WTC11 (cell line): ENCODE measurements at regions of chr16 and their contacts with region 1.

Region 1: DNA sequence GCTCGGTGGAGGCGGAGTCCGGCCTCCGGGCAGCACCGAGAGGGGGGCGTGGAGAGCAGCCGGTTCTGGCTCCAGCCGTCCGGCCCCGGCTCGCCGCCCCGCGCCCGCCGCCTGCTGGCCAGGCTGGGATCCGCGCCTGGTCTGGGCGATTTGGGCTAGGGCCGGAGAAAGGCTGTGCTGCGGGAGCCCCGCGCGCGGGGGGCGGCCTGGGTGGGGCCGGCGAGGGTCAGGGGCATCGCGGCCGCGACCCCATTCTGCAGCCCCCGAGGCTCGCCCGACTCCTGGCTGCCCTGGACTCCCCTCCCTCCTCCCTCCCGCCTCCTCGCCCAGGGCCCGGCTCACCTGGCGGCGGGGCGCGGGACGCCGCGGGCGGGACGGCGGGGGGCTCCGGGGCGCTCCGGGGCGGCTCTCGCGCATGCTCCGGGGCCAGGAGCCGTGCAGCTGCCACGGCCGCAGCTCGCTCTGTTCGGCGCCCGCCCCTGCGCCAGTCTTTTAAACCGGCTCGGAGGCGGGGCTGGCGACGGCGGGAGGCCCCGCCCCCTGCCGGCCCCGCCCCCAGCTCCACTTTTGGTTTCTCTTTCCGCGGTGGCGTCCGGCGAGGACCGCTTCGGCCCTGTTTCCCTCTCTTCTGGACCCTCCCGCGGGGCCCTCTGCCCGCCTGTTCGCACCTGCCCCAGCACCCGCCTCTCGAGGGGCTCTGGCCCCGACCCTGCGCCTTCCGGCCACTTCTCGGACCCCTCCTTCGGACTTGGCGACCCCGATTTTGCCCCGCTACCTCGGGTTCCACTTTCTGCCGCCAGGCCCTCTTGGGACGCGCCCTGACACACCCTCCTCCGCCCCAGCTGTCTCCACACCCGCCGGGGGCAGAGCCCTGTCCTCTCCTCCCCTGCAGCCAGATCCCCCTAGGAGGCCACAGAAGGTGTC is at the start of gene SOCS1:
- DNase-seq: peak; percentile 90
- ATAC-seq: peak; percentile 62
- H3K4me3 Mint-ChIP-seq: peak within 1 kb of the TSS; percentile 87
- H3K27ac Mint-ChIP-seq: peak within 1 kb of the TSS; percentile 95
- H3K4me1 Mint-ChIP-seq: peaks cover 44% of the 10 kb centered on the region
- H3K27me3 Mint-ChIP-seq: no peaks in the 10 kb centered on the region; the same call in 1 of the 2 replicates
- CTCF ChIP-seq: peak; percentile 85
- total RNA-seq, gene SOCS1: 62.3 to 67.1 TPM (median 62.5 TPM) in 3 replicates

Region 2: GRCh38 chr16:10964039-10964890 is 291.7 kb before region 1 on chr16:
- CTCF ChIA-PET with region 1: interaction called, 27 read pairs
- POLR2A ChIA-PET with region 1: interaction called, 3 read pairs
- DNase-seq: peak; percentile 85
- ATAC-seq: peak; percentile 91
- H3K4me3 Mint-ChIP-seq: no peak overlapping the region
- H3K27ac Mint-ChIP-seq: no peak overlapping the region
- H3K4me1 Mint-ChIP-seq: peaks cover 4% of the 10 kb centered on the region
- H3K27me3 Mint-ChIP-seq: no peaks in the 10 kb centered on the region
- CTCF ChIP-seq: peak; percentile 96

Region 3: GRCh38 chr16:11190588-11191560 is 65.1 kb before region 1 on chr16:
- CTCF ChIA-PET with region 1: no interaction called
- POLR2A ChIA-PET with region 1: no interaction called
- DNase-seq: no peak
- ATAC-seq: no peak
- H3K4me3 Mint-ChIP-seq: no peak overlapping the region
- H3K27ac Mint-ChIP-seq: peak overlapping the region; percentile 9; the same call in 1 of the 2 replicates
- H3K4me1 Mint-ChIP-seq: peaks cover 11% of the 10 kb centered on the region
- H3K27me3 Mint-ChIP-seq: peaks cover 2% of the 10 kb centered on the region; the same call in 1 of the 2 replicates
- CTCF ChIP-seq: no peak

Region 4: DNA sequence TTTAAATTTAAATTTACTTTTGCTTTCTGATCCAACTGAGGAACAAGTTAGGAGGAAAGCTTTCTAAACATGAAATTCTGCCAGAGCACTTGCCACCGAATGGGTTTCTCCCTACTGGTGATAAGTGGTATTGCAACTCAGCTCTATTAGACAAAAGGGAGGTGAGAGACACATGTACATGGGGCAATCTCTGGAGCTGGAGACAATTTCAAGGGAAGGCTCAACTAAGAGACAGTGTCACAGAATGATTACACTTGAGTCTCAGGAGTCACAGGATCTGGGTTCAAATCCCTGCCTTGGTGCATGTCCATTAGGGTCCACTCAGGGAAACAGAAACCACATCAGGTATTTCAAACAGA is 37.4 kb before region 1 on chr16:
- CTCF ChIA-PET with region 1: interaction called, 10 read pairs
- POLR2A ChIA-PET with region 1: no interaction called
- DNase-seq: no peak
- ATAC-seq: no peak
- H3K4me3 Mint-ChIP-seq: no peak overlapping the region
- H3K27ac Mint-ChIP-seq: no peak overlapping the region
- H3K4me1 Mint-ChIP-seq: no peaks in the 10 kb centered on the region
- H3K27me3 Mint-ChIP-seq: peaks cover 3% of the 10 kb centered on the region
- CTCF ChIP-seq: peak; percentile 70

Region 5: GRCh38 chr16:11291091-11291703 is 35.2 kb after region 1 on chr16:
- CTCF ChIA-PET with region 1: interaction called, 13 read pairs
- POLR2A ChIA-PET with region 1: interaction called, 4 read pairs
- DNase-seq: no peak
- ATAC-seq: peak; percentile 83
- H3K4me3 Mint-ChIP-seq: no peak overlapping the region
- H3K27ac Mint-ChIP-seq: peak overlapping the region; percentile 17
- H3K4me1 Mint-ChIP-seq: peaks cover 20% of the 10 kb centered on the region
- H3K27me3 Mint-ChIP-seq: no peaks in the 10 kb centered on the region; the same call in 1 of the 2 replicates
- CTCF ChIP-seq: no peak

Region 6: DNA sequence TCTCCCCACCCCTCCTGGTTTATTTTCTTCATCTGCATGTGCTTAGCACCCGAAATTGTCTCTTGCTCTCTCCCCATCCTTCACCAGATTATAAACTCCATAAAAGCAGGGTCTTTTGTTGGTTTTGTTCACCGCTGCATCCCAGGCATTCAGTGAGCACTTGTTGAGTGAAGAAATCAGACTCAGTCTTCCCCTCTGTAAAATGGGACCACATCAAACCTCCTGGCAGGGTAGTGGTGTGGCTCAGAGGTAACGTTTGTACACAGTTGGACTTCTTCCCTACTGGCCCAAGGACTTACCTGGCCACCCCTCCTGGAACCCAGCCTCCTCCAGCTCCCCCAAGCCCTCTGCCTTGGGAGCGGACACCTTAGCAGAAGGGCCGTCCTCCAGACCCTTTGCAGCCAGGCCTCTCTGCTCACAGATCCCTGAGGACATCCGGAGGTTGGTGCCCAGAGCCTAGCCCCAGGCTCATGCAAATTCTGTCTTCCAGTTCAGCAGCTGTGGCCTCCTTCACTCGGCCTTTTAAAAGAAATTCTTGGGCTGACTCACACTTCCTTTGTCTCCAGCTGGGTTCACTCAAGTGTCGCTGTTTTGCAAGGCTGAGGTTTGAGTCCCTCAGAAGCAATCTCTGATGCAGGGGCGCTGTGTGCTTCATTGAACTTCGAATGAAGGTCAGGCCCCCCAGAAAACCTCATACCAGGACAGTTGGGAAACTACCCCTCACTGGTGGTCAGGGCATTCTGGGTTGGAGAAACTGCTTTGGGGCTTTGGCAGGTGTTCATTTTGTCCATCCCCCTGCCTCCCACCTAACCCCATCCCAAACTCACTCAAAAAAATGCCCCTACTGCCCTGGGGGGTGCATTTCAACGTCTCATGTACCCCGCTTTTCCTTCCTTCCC is 72.4 kb after region 1 on chr16:
- CTCF ChIA-PET with region 1: interaction called, 7 read pairs
- POLR2A ChIA-PET with region 1: interaction called, 16 read pairs
- DNase-seq: peak; percentile 79
- ATAC-seq: peak; percentile 89
- H3K4me3 Mint-ChIP-seq: peak overlapping the region; percentile 58
- H3K27ac Mint-ChIP-seq: peak overlapping the region; percentile 100
- H3K4me1 Mint-ChIP-seq: peaks cover 62% of the 10 kb centered on the region
- H3K27me3 Mint-ChIP-seq: no peaks in the 10 kb centered on the region
- CTCF ChIP-seq: no peak

Region 7: GRCh38 chr16:11370084-11370931 is 114.3 kb after region 1 on chr16:
- CTCF ChIA-PET with region 1: interaction called, 70 read pairs
- POLR2A ChIA-PET with region 1: interaction called, 18 read pairs
- DNase-seq: no peak
- ATAC-seq: no peak
- H3K4me3 Mint-ChIP-seq: no peak overlapping the region
- H3K27ac Mint-ChIP-seq: peak overlapping the region; percentile 4; the same call in 1 of the 2 replicates
- H3K4me1 Mint-ChIP-seq: peaks cover 18% of the 10 kb centered on the region
- H3K27me3 Mint-ChIP-seq: no peaks in the 10 kb centered on the region
- CTCF ChIP-seq: no peak